Tibial artery (tissue), 4 donors: ENCODE measurements at regions of chr4 and their contacts with region 1.

Region 1: DNA sequence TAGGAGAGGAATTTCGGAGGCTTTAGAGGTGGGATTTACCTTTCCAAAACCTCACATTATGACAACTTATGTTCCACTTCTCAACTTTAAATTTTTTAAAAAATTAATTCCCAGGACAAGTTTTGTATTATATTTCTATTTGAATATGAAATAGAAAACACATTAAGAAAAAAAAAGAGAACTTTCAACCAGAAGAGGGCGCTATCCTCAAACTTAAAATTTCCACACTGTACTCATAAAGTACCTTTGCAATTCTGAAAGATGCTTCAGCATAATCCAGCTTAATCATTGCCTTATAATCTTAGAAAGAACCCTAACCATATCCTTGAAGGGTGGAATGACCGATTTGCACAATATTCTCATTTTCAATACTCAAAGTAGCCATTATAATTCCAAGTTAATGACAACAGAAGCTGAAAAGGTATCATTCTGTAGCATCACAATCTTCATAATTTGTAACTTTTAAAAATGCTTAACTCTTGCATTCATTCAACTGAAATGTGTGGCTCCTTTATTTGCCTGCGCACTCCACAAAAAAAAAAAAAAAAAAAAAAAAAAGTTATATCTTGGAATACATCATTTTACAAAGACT is 158.0 kb downstream of the KCNIP4 start:
- DNase-seq: no peak
- H3K4me3 ChIP-seq: no peak overlapping the region
- H3K27ac ChIP-seq: no peak overlapping the region
- H3K4me1 ChIP-seq: no peaks in the 10 kb centered on the region
- H3K27me3 ChIP-seq: no peaks in the 10 kb centered on the region
- CTCF ChIP-seq: peak; percentile 22 to 30

Region 2: GRCh38 chr4:22003878-22004277 is 213.3 kb after region 1 on chr4:
- intact Hi-C with region 1: no loop called
- DNase-seq: no peak
- H3K4me3 ChIP-seq: no peak overlapping the region
- H3K27ac ChIP-seq: no peak overlapping the region
- H3K4me1 ChIP-seq: no peaks in the 10 kb centered on the region
- H3K27me3 ChIP-seq: no peaks in the 10 kb centered on the region
- CTCF ChIP-seq: no peak

Region 3: DNA sequence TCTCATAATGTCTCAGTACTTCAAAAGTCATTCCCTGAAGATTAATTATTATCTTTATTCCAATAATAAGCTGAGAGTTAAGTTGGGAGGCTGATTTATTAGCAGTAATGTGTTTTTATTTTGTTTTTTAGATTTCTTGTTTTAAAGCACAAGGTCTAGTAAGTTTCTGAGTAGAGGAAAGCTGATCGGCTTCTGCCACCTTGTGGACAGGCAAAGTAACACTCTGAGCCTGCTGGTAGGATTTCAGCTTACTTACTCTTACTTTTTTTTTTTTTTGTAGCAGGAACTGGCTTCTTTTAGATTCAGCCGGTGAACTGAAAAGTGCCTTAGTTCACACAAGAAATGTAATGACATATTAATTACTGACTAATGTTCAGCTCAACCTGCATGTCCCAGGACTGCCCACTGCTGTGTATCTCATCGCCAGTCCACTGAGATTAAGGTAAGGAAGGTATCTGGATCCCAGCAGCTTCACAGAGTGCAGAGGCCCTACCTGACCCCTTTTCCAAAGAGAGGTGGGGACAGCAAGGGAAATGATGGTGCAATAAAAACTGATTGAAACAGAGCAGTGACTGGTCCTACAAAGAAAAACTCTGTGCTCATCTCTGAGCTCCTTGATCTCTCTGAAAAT is 598.8 kb after region 1 on chr4:
- intact Hi-C with region 1: loop called (anchors 5 kb)
- DNase-seq: no peak
- H3K4me3 ChIP-seq: no peak overlapping the region
- H3K27ac ChIP-seq: no peak overlapping the region
- H3K4me1 ChIP-seq: no peaks in the 10 kb centered on the region
- H3K27me3 ChIP-seq: no peaks in the 10 kb centered on the region
- CTCF ChIP-seq: peak; percentile 52 to 63